Left colon (tissue), 2 donors: ENCODE measurements at regions of chr4 and their contacts with region 1.

Region 1: DNA sequence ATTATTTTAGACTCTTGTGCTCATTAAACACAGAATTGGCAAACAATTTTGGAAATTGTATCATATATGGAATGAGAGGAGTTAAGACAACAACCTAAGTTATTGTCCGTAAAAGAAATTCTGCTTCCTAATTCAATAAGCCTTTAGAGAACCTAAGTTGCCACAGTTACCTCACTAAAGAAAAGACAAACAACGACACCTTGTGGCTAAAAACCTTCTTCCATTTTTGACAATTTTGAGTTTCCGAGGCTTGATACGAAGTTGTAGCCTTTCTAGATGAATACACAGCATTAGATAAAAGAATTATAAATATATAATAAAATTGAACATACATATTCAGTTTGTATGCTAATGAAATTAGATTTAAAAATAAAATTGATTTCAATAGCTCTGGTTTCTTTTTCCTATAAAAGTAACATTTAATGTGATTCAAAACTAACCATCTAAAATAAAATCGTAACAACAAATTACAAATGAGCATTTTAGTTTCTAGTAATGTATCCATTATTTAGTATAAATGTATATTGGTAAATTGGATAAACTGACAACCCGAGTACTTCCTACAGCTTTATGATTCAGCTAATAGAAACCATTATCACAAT is 275.1 kb downstream of the GPM6A start:
- DNase-seq: no peak
- ATAC-seq: no peak

Region 2: DNA sequence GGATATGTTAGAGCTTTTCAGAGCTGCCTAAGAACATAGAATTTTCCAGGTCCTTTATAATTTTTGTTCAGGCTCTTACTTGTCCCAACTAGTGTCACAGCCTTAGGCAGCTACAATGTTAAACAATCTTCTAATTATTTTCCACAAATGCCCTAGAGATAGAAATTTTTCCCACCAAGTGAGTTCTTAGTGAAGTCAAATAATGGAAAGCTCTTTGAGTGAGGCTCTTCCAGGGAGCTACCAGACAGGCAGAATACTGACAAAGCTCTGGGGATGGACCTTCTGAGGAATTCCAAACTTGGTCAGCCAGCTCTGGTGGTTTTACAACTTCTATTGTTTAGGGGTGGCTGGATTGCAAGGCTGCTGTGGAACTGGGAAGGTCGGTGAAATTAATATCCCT is 769.1 kb before region 1 on chr4:
- intact Hi-C with region 1: loop called in 1 of 2 experiments (anchors 5 kb)
- DNase-seq: no peak
- ATAC-seq: no peak

Region 3: DNA sequence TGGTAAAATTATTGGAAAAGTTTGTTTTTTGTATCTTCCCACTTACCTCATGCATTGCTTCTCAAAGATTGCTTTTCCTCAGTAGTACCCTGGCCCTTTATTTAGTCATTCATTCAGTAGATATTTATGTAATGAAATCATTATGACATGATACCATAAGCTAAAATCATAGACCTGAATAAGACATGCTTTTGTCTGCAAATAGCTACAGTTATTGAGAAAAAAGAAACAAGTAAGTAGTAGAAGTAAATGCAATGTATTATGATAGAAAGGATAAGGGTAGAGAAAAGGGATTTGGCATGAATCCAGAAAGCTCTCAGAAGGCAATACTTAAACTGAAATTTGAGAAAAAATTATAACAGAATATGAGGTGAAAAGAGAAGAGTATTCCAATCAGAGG is 77.4 kb before region 1 on chr4:
- intact Hi-C with region 1: no loop called
- DNase-seq: no peak
- ATAC-seq: no peak

Region 4: GRCh38 chr4:175841366-175841765 is 304.4 kb after region 1 on chr4:
- intact Hi-C with region 1: no loop called
- DNase-seq: no peak
- ATAC-seq: no peak

Region 5: GRCh38 chr4:176137631-176138030 is 600.7 kb after region 1 on chr4:
- intact Hi-C with region 1: no loop called
- DNase-seq: no peak
- ATAC-seq: no peak